ENCODE measurements at regions of chr15 and their contacts with region 1.

Region 1: DNA sequence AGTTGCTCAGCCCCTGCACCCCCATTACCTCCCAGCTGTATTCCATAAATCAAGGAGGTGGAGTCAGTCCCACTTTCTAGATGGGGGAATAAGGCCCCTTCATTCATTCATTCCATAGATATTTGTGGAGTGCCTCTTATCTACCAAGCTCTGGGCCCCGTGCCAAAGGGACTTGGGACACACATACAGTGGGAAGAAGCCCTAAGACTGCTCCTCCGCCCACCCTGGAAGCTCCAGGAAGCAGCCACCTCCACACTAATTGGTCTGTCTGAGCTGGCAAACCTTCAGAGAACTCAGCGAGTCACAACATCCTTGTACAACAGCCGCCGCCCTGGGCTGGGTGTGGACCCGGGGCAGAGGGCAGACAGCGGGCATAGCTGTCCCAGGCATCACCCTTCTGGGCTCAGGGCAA is 6.4 kb downstream of the STRA6 start:
- DNase-seq: peak; percentile 55 to 94
- ATAC-seq: peak; percentile 73 to 82
- H3K4me3 ChIP-seq: no peak overlapping the region
- H3K27ac ChIP-seq: peak overlapping the region; percentile 90 to 97
- H3K4me1 ChIP-seq: peaks cover 95% of the 10 kb centered on the region
- CTCF ChIP-seq: no peak
- EP300 ChIP-seq: peak; percentile 62 to 84; a peak in 3 of 5 replicates
- POLR2A ChIP-seq: no peak
- RAD21 ChIP-seq: peak in 1 of 2 experiments; percentile 22; a peak in 3 of 5 replicates

Region 2: GRCh38 chr15:74156678-74157411 is 39.3 kb before region 1 on chr15:
- CTCF ChIA-PET with region 1: no interaction called
- POLR2A ChIA-PET with region 1: no interaction called
- DNase-seq: no peak
- ATAC-seq: no peak
- H3K4me3 ChIP-seq: no peak overlapping the region
- H3K27ac ChIP-seq: no peak overlapping the region
- H3K4me1 ChIP-seq: peaks cover 9% of the 10 kb centered on the region; the same call in 1 of the 3 replicates
- CTCF ChIP-seq: no peak
- EP300 ChIP-seq: no peak
- POLR2A ChIP-seq: no peak
- RAD21 ChIP-seq: no peak

Region 3: GRCh38 chr15:74179341-74179841 is 16.8 kb before region 1 on chr15:
- CTCF ChIA-PET with region 1: interaction called, 26 read pairs
- POLR2A ChIA-PET with region 1: interaction called, 19 read pairs
- DNase-seq: peak in 1 of 2 experiments; percentile 76
- ATAC-seq: peak; percentile 63 to 84
- H3K4me3 ChIP-seq: no peak overlapping the region
- H3K27ac ChIP-seq: peak overlapping the region; percentile 88 to 90
- H3K4me1 ChIP-seq: peaks cover 57% of the 10 kb centered on the region
- CTCF ChIP-seq: no peak
- EP300 ChIP-seq: peak; percentile 34 to 67; a peak in 2 of 5 replicates
- POLR2A ChIP-seq: no peak
- RAD21 ChIP-seq: no peak

Region 4: GRCh38 chr15:74184276-74185091 is 11.7 kb before region 1 on chr15:
- CTCF ChIA-PET with region 1: interaction called, 26 read pairs
- POLR2A ChIA-PET with region 1: interaction called, 19 read pairs
- DNase-seq: no peak
- ATAC-seq: no peak
- H3K4me3 ChIP-seq: no peak overlapping the region
- H3K27ac ChIP-seq: peak overlapping the region in 1 of 2 experiments; percentile 50; a peak in 3 of 6 replicates
- H3K4me1 ChIP-seq: peaks cover 30% of the 10 kb centered on the region
- CTCF ChIP-seq: no peak
- EP300 ChIP-seq: no peak
- POLR2A ChIP-seq: no peak
- RAD21 ChIP-seq: no peak

Measured in A549 (cell line).